ENCODE measurements at regions of chr12 and their contacts with region 1.

Region 1: DNA sequence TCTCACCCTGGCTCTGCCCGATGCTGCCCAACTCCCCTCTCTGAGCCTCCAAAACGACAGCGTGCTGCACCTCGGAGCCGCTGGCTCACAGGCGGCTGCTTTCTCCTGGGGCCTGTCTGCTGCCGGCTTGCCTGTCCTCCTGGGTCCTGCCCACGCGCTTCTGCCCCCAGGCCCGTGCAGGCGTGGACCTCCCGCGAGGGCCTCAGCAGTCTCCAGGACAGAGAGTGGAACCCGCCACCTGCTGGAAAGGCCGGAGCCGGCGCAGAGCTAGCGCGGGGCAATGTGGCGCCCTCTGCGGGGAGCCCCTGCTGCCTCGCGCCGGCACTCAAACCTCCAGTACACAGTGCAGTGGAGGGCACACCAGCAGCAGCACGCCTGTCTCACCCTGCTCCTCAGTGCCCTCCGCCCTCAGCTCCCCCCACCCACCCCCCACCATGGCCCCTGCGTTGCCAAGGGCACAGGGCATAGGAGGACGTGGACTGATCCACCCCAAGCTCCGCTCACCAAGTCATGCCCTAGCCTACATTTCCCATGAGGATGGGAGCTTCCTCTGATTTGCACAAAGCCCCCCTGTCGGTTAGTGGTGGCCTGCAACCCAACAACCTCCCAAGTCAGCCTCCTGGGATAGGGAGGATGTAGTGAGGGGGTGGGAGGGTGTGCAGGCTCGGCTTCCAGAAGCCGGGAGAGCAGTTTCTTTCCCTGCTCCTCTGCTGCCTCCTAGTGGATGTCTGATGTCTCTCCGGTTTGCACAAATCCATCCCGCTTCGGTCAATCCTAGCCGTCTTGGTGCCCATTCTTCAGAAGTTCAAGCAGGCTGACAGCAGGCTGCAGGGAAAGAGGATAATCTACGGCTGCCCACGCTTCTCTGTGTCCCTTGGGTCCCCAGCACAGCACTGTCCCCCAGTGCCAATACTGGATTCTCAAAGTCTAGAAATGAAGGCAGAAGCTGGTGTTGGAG is 25.2 kb downstream of the KRT8 start:
- DNase-seq: peak; percentile 84
- H3K4me3 Mint-ChIP-seq: peak overlapping the region; percentile 69
- H3K27ac Mint-ChIP-seq: no peak overlapping the region
- H3K4me1 Mint-ChIP-seq: peaks cover 7% of the 10 kb centered on the region
- H3K27me3 Mint-ChIP-seq: no peaks in the 10 kb centered on the region

Region 2: DNA sequence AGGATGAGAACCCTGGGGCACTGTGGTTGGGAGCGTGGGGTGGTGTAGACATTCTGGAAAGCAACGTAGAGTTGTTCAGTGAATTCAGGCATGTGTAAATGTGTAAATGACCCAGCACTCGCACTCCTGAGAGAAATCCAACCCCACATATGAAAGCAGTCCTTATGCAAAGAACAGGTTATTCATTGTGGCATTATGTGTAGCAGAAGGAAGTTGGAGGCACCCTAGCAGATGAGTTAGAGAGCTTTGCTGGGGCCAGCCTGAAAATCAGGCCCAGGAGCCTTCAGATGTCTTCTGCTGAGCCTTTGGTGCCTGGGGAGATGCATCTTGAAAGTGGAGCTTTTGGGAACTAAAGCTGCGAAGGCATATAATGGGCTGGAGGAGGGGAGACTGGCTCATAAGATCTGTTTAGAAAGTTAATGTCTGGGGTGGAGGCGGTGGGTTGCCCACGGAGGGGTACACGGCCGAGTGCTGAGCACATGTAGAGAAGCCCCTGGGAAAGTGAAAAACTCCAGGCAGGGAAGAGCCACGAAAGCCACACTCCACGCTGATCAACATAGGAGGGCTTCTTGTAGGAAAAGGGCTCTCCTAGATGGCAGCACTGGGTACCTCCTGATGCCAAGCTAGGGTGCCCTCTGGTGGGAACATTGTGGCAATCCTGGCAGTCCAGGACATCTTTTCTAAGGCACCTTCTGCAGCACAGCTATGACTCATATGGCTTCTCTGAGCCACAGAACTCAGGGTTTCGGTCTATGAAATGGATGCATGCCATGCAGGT is 552.4 kb before region 1 on chr12:
- CTCF ChIA-PET with region 1: interaction called, 11 read pairs
- intact Hi-C with region 1: no loop called
- DNase-seq: peak; percentile 90
- H3K4me3 Mint-ChIP-seq: no peak overlapping the region
- H3K27ac Mint-ChIP-seq: no peak overlapping the region
- H3K4me1 Mint-ChIP-seq: peaks cover 13% of the 10 kb centered on the region
- H3K27me3 Mint-ChIP-seq: peaks cover 5% of the 10 kb centered on the region

Region 3: GRCh38 chr12:52372216-52373154 is 507.2 kb before region 1 on chr12:
- CTCF ChIA-PET with region 1: interaction called, 29 read pairs
- intact Hi-C with region 1: loop called (anchors 2 kb)
- DNase-seq: peak; percentile 77
- H3K4me3 Mint-ChIP-seq: no peak overlapping the region
- H3K27ac Mint-ChIP-seq: no peak overlapping the region
- H3K4me1 Mint-ChIP-seq: no peaks in the 10 kb centered on the region
- H3K27me3 Mint-ChIP-seq: no peaks in the 10 kb centered on the region

Region 4: DNA sequence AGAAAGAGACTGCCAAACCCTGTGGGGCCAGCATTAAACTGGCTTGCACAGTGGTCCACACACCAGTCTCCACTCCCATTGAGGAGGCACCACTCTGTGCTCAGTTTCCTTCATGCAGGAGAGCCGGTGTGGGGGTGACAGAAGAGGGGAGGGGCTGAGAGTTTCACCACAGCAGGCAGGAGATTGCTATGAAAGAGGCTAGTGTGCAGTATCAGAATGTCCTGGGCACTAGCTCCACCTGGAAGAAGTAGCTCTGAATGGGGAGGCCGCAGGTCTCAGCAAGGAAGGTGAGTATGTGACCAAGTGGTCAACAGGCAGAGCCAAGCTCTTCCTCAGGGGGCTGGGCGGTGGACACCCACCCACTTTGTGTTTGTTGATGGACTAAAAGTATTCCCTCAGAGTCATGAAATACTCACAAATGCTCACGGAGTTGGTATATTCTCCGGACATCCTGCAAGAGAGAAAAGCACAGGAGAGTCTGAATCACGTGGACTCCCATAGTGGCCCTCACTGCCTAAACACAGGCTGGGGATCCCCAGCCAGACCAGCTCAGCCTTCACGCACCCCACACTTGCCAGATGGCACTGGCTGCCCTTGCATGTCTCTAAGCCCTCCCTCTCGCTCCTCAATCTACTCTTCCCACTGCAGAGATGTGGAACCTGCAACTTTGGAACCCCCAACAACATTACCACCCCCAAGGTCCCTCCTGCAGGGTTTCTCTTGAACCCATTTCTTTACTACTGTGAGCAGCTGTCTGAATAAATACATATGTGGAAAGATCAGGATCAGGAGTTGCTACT is 270.6 kb before region 1 on chr12:
- CTCF ChIA-PET with region 1: interaction called, 10 read pairs
- intact Hi-C with region 1: no loop called
- DNase-seq: peak; percentile 25
- H3K4me3 Mint-ChIP-seq: no peak overlapping the region
- H3K27ac Mint-ChIP-seq: no peak overlapping the region
- H3K4me1 Mint-ChIP-seq: peaks cover 93% of the 10 kb centered on the region
- H3K27me3 Mint-ChIP-seq: no peaks in the 10 kb centered on the region

Region 5: GRCh38 chr12:52748578-52748977 is 131.1 kb before region 1 on chr12:
- CTCF ChIA-PET with region 1: no interaction called
- intact Hi-C with region 1: no loop called
- DNase-seq: no peak
- H3K4me3 Mint-ChIP-seq: no peak overlapping the region
- H3K27ac Mint-ChIP-seq: no peak overlapping the region
- H3K4me1 Mint-ChIP-seq: peaks cover 12% of the 10 kb centered on the region
- H3K27me3 Mint-ChIP-seq: no peaks in the 10 kb centered on the region

Region 6: DNA sequence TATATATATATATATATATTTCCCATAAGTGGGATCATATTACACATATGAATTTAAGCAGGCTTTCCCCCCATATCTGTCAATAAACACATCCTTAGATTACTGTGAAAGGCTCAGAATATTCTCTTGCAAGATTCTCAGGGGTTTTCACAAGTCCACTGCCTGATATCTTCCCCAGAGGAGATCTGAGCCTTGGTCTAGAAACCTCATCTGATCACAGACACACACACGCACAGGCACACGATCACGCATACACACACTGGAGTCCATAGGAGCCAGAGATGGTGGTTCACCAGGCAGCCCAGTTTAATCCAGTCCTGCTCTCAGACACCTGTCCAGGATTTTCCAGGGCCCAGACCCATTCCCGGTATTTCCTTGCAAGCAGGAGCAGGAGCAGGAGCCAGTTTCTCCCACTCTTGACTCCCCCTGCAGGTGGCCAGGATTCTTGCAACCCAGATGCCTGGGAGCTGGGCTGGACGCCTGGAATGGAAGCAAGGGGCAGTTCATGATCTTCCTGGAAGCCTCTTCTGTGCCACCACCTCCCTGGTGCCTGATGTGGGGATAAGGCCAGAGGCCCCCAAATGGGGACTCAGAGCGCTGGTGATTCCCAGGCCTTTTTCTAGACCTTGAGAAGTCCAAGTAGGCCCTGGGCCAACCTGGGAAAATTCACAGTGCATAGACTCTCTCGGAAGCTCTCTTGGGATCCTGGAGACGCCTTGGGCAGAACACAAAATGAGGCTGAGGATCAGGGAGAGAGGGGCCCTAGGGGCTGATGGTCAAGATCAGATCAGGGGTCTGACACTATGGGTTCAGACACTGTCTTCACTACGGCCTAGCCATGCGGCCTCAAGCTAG is 14.4 kb before region 1 on chr12:
- CTCF ChIA-PET with region 1: interaction called, 116 read pairs
- intact Hi-C with region 1: no loop called
- DNase-seq: peak; percentile 38
- H3K4me3 Mint-ChIP-seq: no peak overlapping the region
- H3K27ac Mint-ChIP-seq: peak overlapping the region; percentile 30
- H3K4me1 Mint-ChIP-seq: peaks cover 20% of the 10 kb centered on the region
- H3K27me3 Mint-ChIP-seq: no peaks in the 10 kb centered on the region

Region 7: GRCh38 chr12:52992699-52993557 is 113.3 kb after region 1 on chr12:
- CTCF ChIA-PET with region 1: interaction called, 37 read pairs
- intact Hi-C with region 1: no loop called
- DNase-seq: no peak
- H3K4me3 Mint-ChIP-seq: no peak overlapping the region
- H3K27ac Mint-ChIP-seq: no peak overlapping the region
- H3K4me1 Mint-ChIP-seq: no peaks in the 10 kb centered on the region
- H3K27me3 Mint-ChIP-seq: no peaks in the 10 kb centered on the region

Region 8: DNA sequence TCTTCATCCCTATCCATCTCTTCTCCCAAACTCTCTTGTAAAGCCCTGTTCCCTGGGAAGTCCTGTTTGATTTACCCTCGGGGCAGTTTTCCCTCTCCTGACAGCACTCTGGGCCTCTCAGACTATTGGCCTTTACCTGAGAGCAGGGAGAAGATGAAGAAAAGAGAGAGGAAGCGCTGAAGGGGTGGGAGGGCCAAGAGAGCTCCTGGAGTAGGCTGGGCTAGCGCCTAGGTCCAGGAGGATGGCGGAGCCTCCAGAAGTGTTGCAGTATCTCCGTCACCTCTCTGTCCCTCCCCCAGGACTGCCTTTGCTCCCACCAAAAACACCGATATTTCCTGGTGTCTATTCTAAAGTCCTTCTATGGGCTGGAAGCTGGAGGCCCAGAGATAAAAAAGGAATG is 212.1 kb after region 1 on chr12:
- CTCF ChIA-PET with region 1: no interaction called
- intact Hi-C with region 1: no loop called
- DNase-seq: no peak
- H3K4me3 Mint-ChIP-seq: no peak overlapping the region
- H3K27ac Mint-ChIP-seq: no peak overlapping the region
- H3K4me1 Mint-ChIP-seq: peaks cover under 1% of the 10 kb centered on the region
- H3K27me3 Mint-ChIP-seq: peaks cover under 1% of the 10 kb centered on the region